IMR-90 (cell line): ENCODE measurements at regions of chr5 and their contacts with region 1.

Region 1: GRCh38 chr5:157575381-157576020 is at the start of gene ADAM19:
- DNase-seq: peak; percentile 53
- ATAC-seq: peak; percentile 84
- H3K4me3 ChIP-seq: peak within 1 kb of the TSS; percentile 80
- H3K27ac ChIP-seq: peak within 1 kb of the TSS; percentile 86
- H3K4me1 ChIP-seq: peaks cover 13% of the 10 kb centered on the region
- H3K27me3 ChIP-seq: no peaks in the 10 kb centered on the region
- CTCF ChIP-seq: no peak
- POLR2A ChIP-seq: peak; percentile 56
- RAD21 ChIP-seq: peak; percentile 3; the same call in 1 of the 2 replicates
- total RNA-seq, gene ADAM19: 35.5 and 38.3 TPM in 2 replicates

Region 2: GRCh38 chr5:157665467-157666100 is 90.1 kb after region 1 on chr5:
- CTCF ChIA-PET with region 1: no interaction called
- POLR2A ChIA-PET with region 1: no interaction called
- dilution Hi-C with region 1: no loop called
- in situ Hi-C with region 1: no loop called
- intact Hi-C with region 1: loop called (anchors 5 kb)
- DNase-seq: peak; percentile 89
- ATAC-seq: peak; percentile 80
- H3K4me3 ChIP-seq: no peak overlapping the region
- H3K27ac ChIP-seq: no peak overlapping the region
- H3K4me1 ChIP-seq: no peaks in the 10 kb centered on the region; the same call in 1 of the 2 replicates
- H3K27me3 ChIP-seq: peaks cover 3% of the 10 kb centered on the region; the same call in 1 of the 2 replicates
- CTCF ChIP-seq: no peak
- POLR2A ChIP-seq: no peak
- RAD21 ChIP-seq: no peak

Region 3: DNA sequence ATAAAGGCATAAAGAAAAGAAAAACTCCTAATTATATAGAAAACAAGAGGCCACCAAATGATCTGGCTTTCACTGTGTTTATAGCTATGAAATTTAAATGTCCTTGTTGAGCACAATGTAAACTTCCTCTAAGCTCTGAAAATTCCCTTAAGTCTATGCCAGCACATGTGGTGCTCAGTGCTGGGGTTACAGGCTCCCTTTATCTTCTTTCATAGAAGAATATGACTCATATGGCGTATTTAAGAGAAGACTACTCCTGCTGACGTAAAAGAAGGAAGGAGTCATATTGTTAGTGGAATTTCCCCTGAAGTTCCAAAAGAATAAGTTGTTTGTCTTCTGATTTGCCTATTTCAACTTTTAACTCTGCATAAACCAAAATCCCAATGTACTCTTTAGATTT is 1603.5 kb after region 1 on chr5:
- CTCF ChIA-PET with region 1: no interaction called
- POLR2A ChIA-PET with region 1: no interaction called
- dilution Hi-C with region 1: no loop called
- in situ Hi-C with region 1: loop called (anchors 25 kb)
- intact Hi-C with region 1: no loop called
- DNase-seq: peak; percentile 99
- ATAC-seq: peak; percentile 72
- H3K4me3 ChIP-seq: no peak overlapping the region
- H3K27ac ChIP-seq: peak overlapping the region; percentile 93; the same call in 1 of the 2 replicates
- H3K4me1 ChIP-seq: peaks cover 22% of the 10 kb centered on the region
- H3K27me3 ChIP-seq: no peaks in the 10 kb centered on the region
- CTCF ChIP-seq: no peak
- POLR2A ChIP-seq: peak; percentile 78
- RAD21 ChIP-seq: no peak